Activated B cell treated with CpG ODN at 0.5 μM for 24 hours (primary cell): ENCODE measurements at regions of chr17 and their contacts with region 1.

Region 1: DNA sequence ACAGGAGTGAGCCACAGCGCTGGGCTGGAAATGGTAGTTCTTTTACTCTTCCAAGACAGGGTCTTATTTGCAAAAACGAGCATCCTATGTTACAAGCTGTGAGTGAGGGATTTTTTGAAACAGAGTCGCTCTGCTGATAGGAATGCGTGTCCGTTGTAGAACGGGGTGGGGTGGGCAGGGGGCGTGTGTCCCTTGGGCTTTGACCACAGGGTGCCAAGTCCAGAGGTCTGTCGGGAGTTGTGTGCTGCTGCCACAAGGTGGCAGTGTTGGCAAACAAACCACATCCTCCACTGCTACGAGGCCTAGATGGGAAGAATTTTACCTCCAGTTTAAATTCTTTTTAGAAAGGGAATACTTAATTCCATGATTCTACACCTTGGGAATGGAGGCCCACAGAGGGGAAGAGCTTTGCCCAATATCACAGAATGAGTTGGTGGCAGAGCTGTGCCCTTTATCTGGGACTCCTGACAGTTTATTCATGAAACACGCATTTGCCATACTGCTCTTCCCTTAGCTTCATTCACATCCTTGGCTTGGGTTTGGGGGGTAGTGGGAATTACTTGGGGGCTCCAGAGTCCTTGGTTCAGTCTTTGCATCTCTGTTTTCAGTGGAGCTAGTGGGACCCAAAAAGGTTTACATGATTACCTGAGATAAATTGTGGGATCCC is 30.6 kb upstream of the ETV4 start:
- DNase-seq: peak; percentile 53
- ATAC-seq: peak; percentile 21
- H3K4me3 Mint-ChIP-seq: no peak overlapping the region
- H3K27ac Mint-ChIP-seq: peak overlapping the region; percentile 46
- H3K4me1 Mint-ChIP-seq: peaks cover 23% of the 10 kb centered on the region
- H3K27me3 Mint-ChIP-seq: peaks cover 4% of the 10 kb centered on the region
- CTCF ChIP-seq: no peak

Region 2: GRCh38 chr17:43615330-43616028 is 38.8 kb after region 1 on chr17:
- CTCF ChIA-PET with region 1: no interaction called
- POLR2A ChIA-PET with region 1: no interaction called
- intact Hi-C with region 1: no loop called
- DNase-seq: no peak
- ATAC-seq: no peak
- H3K4me3 Mint-ChIP-seq: no peak overlapping the region
- H3K27ac Mint-ChIP-seq: no peak overlapping the region
- H3K4me1 Mint-ChIP-seq: no peaks in the 10 kb centered on the region
- H3K27me3 Mint-ChIP-seq: peaks cover 17% of the 10 kb centered on the region
- CTCF ChIP-seq: no peak

Region 3: GRCh38 chr17:43628089-43628650 is 51.5 kb after region 1 on chr17:
- CTCF ChIA-PET with region 1: no interaction called
- POLR2A ChIA-PET with region 1: no interaction called
- intact Hi-C with region 1: no loop called
- DNase-seq: no peak
- ATAC-seq: no peak
- H3K4me3 Mint-ChIP-seq: no peak overlapping the region
- H3K27ac Mint-ChIP-seq: no peak overlapping the region
- H3K4me1 Mint-ChIP-seq: no peaks in the 10 kb centered on the region
- H3K27me3 Mint-ChIP-seq: peaks cover 14% of the 10 kb centered on the region
- CTCF ChIP-seq: no peak

Region 4: GRCh38 chr17:43661699-43662412 is 85.2 kb after region 1 on chr17 and contains the start of gene MEOX1:
- CTCF ChIA-PET with region 1: interaction called, 15 read pairs
- POLR2A ChIA-PET with region 1: no interaction called
- intact Hi-C with region 1: no loop called
- DNase-seq: no peak
- ATAC-seq: no peak
- H3K4me3 Mint-ChIP-seq: no peak within 1 kb of the TSS
- H3K27ac Mint-ChIP-seq: no peak within 1 kb of the TSS
- H3K4me1 Mint-ChIP-seq: no peaks in the 10 kb centered on the region
- H3K27me3 Mint-ChIP-seq: peaks cover 24% of the 10 kb centered on the region
- CTCF ChIP-seq: no peak
- total RNA-seq, gene MEOX1: not detected in 2 replicates

Region 5: DNA sequence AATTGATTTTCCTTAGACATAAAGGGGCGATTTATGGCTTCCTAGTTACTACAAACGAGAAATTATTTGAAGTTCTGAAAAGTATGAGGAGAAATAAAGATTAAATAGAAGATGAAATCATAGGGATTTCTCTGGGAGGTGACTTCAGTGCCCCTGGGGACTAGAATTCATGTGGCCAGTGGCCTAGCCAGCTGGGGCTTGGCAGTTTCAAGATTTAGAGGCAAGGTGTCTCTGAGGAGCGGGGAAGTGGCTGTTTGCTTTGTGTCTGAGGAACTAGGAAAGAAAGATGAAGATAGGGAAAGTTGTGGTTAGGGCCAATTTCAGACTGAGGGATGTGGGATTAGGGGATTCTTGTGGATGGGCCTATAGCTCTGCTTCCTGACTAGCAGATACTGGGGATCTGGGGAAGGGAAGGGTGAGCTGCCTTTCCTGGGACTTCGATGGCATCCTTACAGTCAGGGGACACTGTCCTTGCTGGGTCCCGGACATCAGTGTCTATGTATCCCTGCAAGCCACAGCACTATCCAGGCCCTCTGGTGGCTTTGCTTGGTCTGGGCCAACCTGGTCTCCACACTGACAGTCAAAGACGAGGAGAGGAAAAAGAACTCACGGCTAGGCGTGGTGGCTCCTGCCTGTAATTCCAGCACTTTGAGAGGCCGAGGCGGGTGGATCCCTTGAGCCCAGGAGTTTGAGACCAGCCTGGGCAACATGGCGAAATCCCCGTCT is 107.4 kb after region 1 on chr17:
- CTCF ChIA-PET with region 1: interaction called, 7 read pairs
- POLR2A ChIA-PET with region 1: interaction called, 12 read pairs
- intact Hi-C with region 1: no loop called
- DNase-seq: no peak
- ATAC-seq: no peak
- H3K4me3 Mint-ChIP-seq: no peak overlapping the region
- H3K27ac Mint-ChIP-seq: no peak overlapping the region
- H3K4me1 Mint-ChIP-seq: no peaks in the 10 kb centered on the region
- H3K27me3 Mint-ChIP-seq: peaks cover 7% of the 10 kb centered on the region
- CTCF ChIP-seq: no peak

Region 6: GRCh38 chr17:43760254-43760852 is 183.7 kb after region 1 on chr17:
- CTCF ChIA-PET with region 1: interaction called, 40 read pairs
- POLR2A ChIA-PET with region 1: no interaction called
- intact Hi-C with region 1: loop called (anchors 1 kb)
- DNase-seq: peak; percentile 75
- ATAC-seq: peak; percentile 99
- H3K4me3 Mint-ChIP-seq: no peak overlapping the region
- H3K27ac Mint-ChIP-seq: no peak overlapping the region
- H3K4me1 Mint-ChIP-seq: no peaks in the 10 kb centered on the region
- H3K27me3 Mint-ChIP-seq: peaks cover 31% of the 10 kb centered on the region
- CTCF ChIP-seq: peak; percentile 62

Region 7: DNA sequence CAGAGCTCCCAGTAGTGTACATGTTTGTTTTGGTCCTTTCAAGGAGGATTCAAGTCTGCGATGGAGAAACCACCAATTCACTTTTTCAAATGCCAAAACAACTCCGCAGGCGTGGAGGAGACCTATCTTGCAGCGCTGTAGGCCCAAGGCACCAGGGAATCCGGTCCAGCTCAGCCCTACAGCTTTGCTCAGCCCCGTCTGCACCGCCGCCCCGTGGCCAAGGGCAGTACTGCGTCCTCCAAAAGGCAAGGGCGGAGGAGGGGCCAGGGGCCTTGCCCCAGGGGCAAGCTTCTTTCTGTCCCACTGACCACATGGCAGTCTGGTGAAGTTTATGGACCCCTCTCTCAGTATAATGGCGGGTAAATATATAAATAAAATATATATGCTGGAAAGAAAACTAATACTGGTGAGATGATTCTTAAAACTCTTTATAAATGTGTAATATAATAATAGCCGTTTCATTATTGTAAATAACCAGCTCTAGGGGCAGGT is 269.6 kb after region 1 on chr17:
- CTCF ChIA-PET with region 1: interaction called, 3 read pairs
- POLR2A ChIA-PET with region 1: no interaction called
- intact Hi-C with region 1: loop called (anchors 5 kb)
- DNase-seq: peak; percentile 72
- ATAC-seq: peak; percentile 100
- H3K4me3 Mint-ChIP-seq: no peak overlapping the region
- H3K27ac Mint-ChIP-seq: no peak overlapping the region
- H3K4me1 Mint-ChIP-seq: no peaks in the 10 kb centered on the region
- H3K27me3 Mint-ChIP-seq: peaks cover 22% of the 10 kb centered on the region
- CTCF ChIP-seq: peak; percentile 79